Left ventricle myocardium inferior (tissue), 1 donor: ENCODE measurements at regions of chr5 and their contacts with region 1.

Region 1: GRCh38 chr5:171207256-171207847 is 101.7 kb upstream of the TLX3 start:
- DNase-seq: no peak
- H3K4me3 ChIP-seq: no peak overlapping the region
- H3K27ac ChIP-seq: no peak overlapping the region
- H3K4me1 ChIP-seq: no peaks in the 10 kb centered on the region
- H3K27me3 ChIP-seq: no peaks in the 10 kb centered on the region
- CTCF ChIP-seq: peak; percentile 61

Region 2: DNA sequence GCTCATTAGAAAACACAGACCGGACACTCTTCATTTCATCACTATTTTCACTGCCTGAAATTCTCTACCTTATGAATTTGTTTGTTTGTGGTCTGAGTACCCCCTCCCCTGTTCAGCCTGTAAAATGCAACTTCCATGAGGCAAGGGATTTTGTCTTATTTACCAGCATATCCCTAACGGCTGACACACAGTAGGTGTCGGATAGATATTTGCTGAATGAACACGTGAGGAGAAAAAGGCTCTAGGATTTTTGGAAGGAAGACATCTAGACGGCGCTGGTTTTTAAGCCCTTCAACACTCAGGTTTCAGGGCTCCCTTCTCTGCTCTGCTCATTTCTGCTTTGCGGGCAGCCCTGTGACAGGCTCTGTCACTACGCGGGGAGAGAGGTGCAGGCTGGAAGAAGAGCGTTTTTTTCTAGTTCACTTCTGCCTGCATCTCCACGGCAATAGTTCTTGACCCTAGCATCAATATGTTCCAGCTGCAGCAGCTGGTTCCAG is 859.2 kb before region 1 on chr5:
- intact Hi-C with region 1: no loop called
- DNase-seq: no peak
- H3K4me3 ChIP-seq: no peak overlapping the region
- H3K27ac ChIP-seq: no peak overlapping the region
- H3K4me1 ChIP-seq: peaks cover 6% of the 10 kb centered on the region
- H3K27me3 ChIP-seq: peaks cover 59% of the 10 kb centered on the region
- CTCF ChIP-seq: peak; percentile 52

Region 3: DNA sequence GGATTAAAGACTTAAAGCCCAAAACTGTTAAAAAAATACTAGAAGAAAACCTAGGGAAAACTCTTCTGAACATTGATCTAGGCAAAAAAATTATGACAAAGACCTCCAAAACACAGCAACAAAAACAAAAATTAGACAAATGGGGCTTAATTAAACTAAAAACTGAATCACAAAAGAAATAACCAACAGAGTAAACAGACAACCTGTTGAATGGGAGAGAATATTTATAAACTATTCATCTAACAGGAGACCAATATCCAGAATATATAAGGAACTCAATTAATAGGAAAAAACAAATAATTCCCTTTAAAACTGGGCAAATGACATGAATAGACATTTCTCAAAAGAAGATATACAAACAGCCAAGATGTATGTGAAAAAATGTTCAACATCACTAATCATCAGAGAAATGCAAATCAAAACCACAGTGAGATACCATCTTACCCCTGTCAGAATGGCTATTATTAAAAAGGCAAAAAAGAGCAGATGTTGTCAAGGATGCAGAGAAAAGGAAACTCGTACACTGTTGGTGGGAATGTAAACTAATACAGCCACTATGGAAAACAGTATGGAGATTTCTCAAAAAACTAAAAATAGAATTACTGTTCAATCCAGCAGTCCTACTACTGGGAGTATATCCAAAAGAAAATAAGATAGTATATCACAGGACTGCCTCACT is 51.5 kb after region 1 on chr5:
- intact Hi-C with region 1: no loop called
- DNase-seq: no peak
- H3K4me3 ChIP-seq: no peak overlapping the region
- H3K27ac ChIP-seq: no peak overlapping the region
- H3K4me1 ChIP-seq: no peaks in the 10 kb centered on the region
- H3K27me3 ChIP-seq: no peaks in the 10 kb centered on the region
- CTCF ChIP-seq: no peak

Region 4: GRCh38 chr5:171342362-171343111 is 135.2 kb after region 1 on chr5:
- intact Hi-C with region 1: loop called (anchors 5 kb)
- DNase-seq: no peak
- H3K4me3 ChIP-seq: no peak overlapping the region
- H3K27ac ChIP-seq: no peak overlapping the region
- H3K4me1 ChIP-seq: no peaks in the 10 kb centered on the region
- H3K27me3 ChIP-seq: peaks cover 52% of the 10 kb centered on the region
- CTCF ChIP-seq: peak; percentile 68

Region 5: DNA sequence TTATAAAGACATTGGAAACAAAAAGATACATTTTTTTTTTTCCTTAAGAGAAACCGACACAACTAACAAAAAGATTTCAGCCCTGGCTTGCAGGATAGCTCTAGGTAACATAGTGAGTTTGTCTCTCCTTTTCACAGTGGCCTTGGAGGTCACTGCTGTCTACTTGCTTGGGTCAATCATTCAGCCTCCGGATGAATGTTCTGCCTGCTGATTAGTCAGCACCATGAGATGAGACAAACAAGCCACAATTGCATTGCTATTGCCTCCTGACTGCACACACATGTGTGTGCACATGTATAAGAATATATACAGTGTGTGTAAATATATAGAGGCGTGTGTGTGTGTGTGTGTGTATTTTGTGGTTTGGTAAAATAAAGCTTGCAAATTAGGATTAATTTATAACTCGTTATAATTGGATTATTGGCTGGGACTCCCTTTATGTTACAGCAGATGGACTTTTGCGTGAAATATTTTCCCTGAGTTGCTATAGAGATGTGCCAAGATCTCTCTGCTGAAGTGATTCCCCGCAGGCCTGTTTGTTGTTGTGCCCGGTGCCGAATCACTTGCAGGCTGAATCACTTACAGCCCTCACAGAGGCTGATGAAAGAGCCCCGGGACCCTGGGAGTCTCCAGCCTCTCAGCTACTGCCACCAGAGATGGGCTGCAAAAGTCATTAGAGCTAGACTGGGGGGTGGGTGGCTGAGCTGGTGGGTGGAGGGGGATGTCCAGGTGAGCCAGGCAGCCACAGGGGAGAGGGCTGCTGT is 373.3 kb after region 1 on chr5:
- intact Hi-C with region 1: no loop called
- DNase-seq: no peak
- H3K4me3 ChIP-seq: no peak overlapping the region
- H3K27ac ChIP-seq: peak overlapping the region; percentile 82
- H3K4me1 ChIP-seq: peaks cover 44% of the 10 kb centered on the region
- H3K27me3 ChIP-seq: no peaks in the 10 kb centered on the region
- CTCF ChIP-seq: no peak